Left cardiac atrium (tissue), 4 donors: ENCODE measurements at regions of chr3 and their contacts with region 1.

Region 1: DNA sequence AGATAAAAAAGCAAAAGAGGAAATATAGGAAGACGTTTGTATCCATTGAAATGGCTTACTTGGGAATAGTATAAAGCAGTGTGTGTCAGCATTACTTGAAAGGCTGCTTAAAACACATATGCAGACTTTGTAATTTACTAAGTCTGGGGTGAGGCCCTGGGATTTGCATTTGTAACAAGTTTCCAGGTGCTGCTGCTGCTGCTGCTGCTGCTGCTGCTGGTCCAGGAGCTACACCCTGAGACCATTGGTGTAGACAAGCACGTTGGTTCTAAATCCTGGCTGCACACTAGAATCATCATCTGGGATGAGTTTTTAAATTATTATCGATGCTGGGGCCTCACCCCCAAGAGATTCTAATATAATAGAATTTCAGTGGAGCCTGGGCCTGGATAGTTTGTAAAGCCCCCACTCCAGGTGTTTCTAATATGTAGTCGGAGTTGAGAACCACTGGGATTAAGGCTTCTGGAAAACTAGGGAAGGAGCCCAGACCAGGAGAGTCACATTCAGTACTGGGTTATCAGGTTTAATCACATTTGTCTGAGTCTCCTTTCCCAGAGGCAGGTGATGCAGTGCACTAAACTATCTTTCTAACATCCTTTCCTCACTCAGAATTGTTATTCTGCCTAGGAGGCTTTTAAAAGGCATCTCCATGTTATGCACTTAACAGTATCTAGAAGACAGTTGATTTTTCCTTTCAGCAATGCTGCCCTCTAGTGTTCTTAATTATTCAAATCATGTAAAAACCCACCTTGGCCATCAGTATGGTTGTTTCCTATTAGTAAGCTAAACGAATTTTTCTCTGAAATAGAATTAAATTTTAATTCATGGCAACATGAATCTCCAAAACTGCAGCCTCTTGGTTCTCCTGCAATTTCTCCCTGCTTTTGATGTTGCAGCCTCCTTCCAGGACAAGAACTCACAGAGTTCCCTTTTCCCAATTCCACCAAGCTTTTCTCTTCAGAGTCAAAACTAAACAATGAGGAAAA is 45.4 kb downstream of the SSR3 start:
- DNase-seq: no peak
- ATAC-seq: peak; percentile 55 to 62

Region 2: GRCh38 chr3:156040041-156040440 is 469.4 kb before region 1 on chr3:
- intact Hi-C with region 1: loop called in 1 of 2 experiments (anchors 10 kb)
- DNase-seq: no peak
- ATAC-seq: no peak